ENCODE measurements at regions of chr3 and their contacts with region 1.

Region 1: GRCh38 chr3:127803619-127804018 is 18.7 kb downstream of the MGLL start:
- DNase-seq: no peak
- H3K4me3 ChIP-seq: no peak overlapping the region
- H3K27ac ChIP-seq: no peak overlapping the region
- H3K4me1 ChIP-seq: no peaks in the 10 kb centered on the region
- H3K27me3 ChIP-seq: no peaks in the 10 kb centered on the region
- CTCF ChIP-seq: no peak
- EP300 ChIP-seq: no peak
- POLR2A ChIP-seq: no peak
- RAD21 ChIP-seq: no peak

Region 2: GRCh38 chr3:127646501-127647046 is 157.0 kb before region 1 on chr3:
- CTCF ChIA-PET with region 1: no interaction called
- POLR2A ChIA-PET with region 1: no interaction called
- DNase-seq: no peak
- H3K4me3 ChIP-seq: no peak overlapping the region
- H3K27ac ChIP-seq: no peak overlapping the region
- H3K4me1 ChIP-seq: peaks cover 0 to 7% (median 2%) of the 10 kb centered on the region in 4 experiments; a peak in 3 of 7 replicates
- H3K27me3 ChIP-seq: no peaks in the 10 kb centered on the region
- CTCF ChIP-seq: no peak
- EP300 ChIP-seq: no peak
- POLR2A ChIP-seq: no peak
- RAD21 ChIP-seq: no peak

Region 3: DNA sequence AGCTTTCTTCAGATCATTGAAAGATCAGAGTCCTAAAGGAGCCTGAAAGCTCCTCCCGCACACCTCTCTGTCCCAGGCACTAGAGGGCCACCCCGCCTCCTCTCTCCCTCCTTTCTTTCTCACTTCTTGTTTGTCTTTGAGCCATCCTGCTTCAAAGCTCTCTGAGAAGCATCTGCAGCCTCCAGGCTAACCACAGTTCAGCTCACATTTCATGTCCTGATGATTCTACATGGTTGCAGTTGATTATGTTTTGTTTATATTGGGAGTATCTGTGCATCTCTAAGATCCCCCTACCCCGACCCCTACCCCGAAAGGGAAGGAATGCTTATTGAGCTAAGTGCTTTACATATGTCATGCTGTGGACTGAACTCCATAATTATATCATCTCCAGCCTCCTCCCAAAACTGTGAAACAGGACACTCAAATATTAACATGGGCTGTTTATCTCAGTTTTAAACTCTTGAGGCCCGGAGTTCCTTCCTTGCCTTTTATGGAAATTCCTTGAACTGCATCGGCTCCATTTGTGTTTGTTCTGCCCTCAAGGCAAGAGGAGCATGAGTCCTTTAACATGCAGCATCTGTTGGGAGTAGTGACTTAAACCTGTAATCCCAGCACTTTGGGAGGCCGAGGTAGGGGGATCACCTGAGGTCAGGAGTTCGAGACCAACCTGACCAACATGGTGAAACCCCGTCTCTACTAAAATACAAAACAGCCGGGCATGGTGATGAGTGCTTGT is 12.2 kb before region 1 on chr3:
- CTCF ChIA-PET with region 1: interaction called, 15 read pairs
- POLR2A ChIA-PET with region 1: no interaction called
- DNase-seq: no peak
- H3K4me3 ChIP-seq: no peak overlapping the region
- H3K27ac ChIP-seq: no peak overlapping the region
- H3K4me1 ChIP-seq: no peaks in the 10 kb centered on the region; a peak in 1 of 7 replicates
- H3K27me3 ChIP-seq: no peaks in the 10 kb centered on the region
- CTCF ChIP-seq: peak; percentile 37 to 49 (median 48)
- EP300 ChIP-seq: no peak
- POLR2A ChIP-seq: no peak
- RAD21 ChIP-seq: peak; percentile 48 to 61

Measured in H1 (cell line).